ENCODE measurements at regions of chr2 and their contacts with region 1.

Region 1: DNA sequence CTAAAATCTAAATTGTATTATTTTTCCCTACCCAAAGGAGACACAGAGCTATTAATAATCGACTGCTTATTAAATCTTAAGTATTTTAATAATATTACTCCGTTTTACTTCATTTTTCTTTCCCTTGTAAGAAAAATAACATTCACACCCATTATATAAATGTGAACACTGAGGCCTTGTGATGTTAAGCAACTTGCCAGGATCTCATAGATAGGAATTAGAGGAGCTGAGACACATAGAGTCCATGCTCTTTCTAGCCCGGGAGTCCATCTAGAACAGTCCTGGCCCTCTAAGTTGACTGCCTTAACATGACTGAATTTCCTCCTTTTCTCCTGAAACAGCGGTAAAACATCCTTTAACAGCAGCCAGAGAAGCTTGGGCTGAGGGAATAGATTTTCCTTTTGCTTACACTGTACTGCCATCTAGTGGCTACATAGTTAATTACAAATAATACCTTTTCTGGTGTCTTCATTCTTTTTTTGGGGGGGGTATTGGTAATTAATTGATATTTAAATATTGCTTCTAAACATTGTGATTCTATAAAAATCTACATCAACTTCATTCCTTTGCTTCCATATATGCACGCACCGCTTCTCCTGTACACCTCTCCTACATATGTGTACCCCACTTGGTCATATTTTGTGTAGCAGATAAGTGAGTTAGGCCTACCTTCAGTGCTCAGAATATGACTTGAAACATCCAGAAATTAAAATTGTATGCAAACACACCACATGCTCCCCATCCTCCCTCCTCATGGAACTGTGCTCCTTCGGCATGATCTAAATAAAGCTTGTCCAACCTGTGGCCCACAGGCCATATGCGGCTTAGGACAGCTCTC is 125.8 kb upstream of the HNMT start:
- DNase-seq: peak in 1 of 2 experiments; percentile 50
- H3K4me3 ChIP-seq: no peak overlapping the region
- H3K4me3 Mint-ChIP-seq: no peak overlapping the region
- H3K27ac Mint-ChIP-seq: no peak overlapping the region
- H3K4me1 ChIP-seq: no peaks in the 10 kb centered on the region
- H3K4me1 Mint-ChIP-seq: no peaks in the 10 kb centered on the region
- H3K27me3 ChIP-seq: no peaks in the 10 kb centered on the region
- H3K27me3 Mint-ChIP-seq: no peaks in the 10 kb centered on the region
- CTCF ChIP-seq: peak; percentile 40 to 78

Region 2: GRCh38 chr2:136874258-136874657 is 964.2 kb before region 1 on chr2:
- CTCF ChIA-PET with region 1: no interaction called
- POLR2A ChIA-PET with region 1: no interaction called
- intact Hi-C with region 1: loop called (anchors 5 kb)
- DNase-seq: peak in 1 of 2 experiments; percentile 11
- H3K4me3 ChIP-seq: no peak overlapping the region
- H3K4me3 Mint-ChIP-seq: no peak overlapping the region
- H3K27ac Mint-ChIP-seq: no peak overlapping the region
- H3K4me1 ChIP-seq: no peaks in the 10 kb centered on the region
- H3K4me1 Mint-ChIP-seq: no peaks in the 10 kb centered on the region
- H3K27me3 ChIP-seq: no peaks in the 10 kb centered on the region
- H3K27me3 Mint-ChIP-seq: no peaks in the 10 kb centered on the region
- CTCF ChIP-seq: peak in 1 of 2 experiments; percentile 7

Region 3: GRCh38 chr2:137467246-137467862 is 371.1 kb before region 1 on chr2:
- CTCF ChIA-PET with region 1: interaction called, 3 read pairs
- POLR2A ChIA-PET with region 1: no interaction called
- intact Hi-C with region 1: loop called (anchors 1 kb)
- DNase-seq: peak; percentile 57 to 65
- H3K4me3 ChIP-seq: no peak overlapping the region
- H3K4me3 Mint-ChIP-seq: no peak overlapping the region
- H3K27ac Mint-ChIP-seq: no peak overlapping the region
- H3K4me1 ChIP-seq: peaks cover 9% of the 10 kb centered on the region; the same call in 1 of the 2 replicates
- H3K4me1 Mint-ChIP-seq: no peaks in the 10 kb centered on the region
- H3K27me3 ChIP-seq: no peaks in the 10 kb centered on the region
- H3K27me3 Mint-ChIP-seq: no peaks in the 10 kb centered on the region
- CTCF ChIP-seq: peak; percentile 73 to 84

Region 4: DNA sequence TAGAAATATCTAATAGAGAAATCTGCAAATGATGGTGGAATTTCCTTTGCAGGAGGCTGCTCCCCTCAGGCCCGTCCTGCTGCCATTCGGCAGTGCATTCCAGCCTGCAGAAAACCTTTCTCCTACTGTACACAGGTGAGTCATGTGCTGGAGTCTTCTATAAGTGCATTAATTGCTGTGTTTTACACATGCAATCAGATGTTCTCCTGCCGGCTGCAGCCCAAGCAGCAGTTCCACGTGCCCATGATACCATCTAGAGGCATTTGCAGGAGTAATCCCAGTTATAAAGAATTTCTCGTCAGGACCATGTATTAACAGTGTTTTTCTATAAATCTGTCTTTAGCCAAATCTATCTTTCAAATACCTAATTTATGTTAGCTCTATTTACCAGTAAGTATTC is 178.9 kb before region 1 on chr2:
- CTCF ChIA-PET with region 1: no interaction called
- POLR2A ChIA-PET with region 1: no interaction called
- intact Hi-C with region 1: loop called (anchors 5 kb)
- DNase-seq: peak; percentile 17 to 42
- H3K4me3 ChIP-seq: no peak overlapping the region
- H3K4me3 Mint-ChIP-seq: no peak overlapping the region
- H3K27ac Mint-ChIP-seq: no peak overlapping the region
- H3K4me1 ChIP-seq: no peaks in the 10 kb centered on the region
- H3K4me1 Mint-ChIP-seq: no peaks in the 10 kb centered on the region
- H3K27me3 ChIP-seq: no peaks in the 10 kb centered on the region
- H3K27me3 Mint-ChIP-seq: no peaks in the 10 kb centered on the region
- CTCF ChIP-seq: peak in 1 of 2 experiments; percentile 32

Region 5: DNA sequence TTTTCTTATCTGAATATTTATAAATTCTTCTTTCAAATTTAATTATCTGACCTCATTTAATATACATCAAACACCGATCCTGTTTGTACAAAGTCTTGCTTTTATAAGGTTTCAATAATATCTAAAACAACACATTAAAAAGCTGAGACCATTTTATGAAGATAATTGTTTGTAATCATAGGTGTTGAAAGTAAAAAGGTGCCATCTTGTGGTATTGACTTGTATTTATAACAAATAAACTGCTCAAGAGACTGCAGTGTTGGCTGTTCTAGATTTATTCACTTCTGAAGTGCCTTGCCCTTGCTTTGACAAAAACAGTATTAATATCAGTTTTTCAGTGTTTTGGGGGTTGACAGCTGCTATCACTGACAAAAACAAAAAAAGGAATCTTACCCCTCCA is 161.0 kb before region 1 on chr2:
- CTCF ChIA-PET with region 1: no interaction called
- POLR2A ChIA-PET with region 1: no interaction called
- intact Hi-C with region 1: loop called (anchors 2 kb)
- DNase-seq: no peak
- H3K4me3 ChIP-seq: no peak overlapping the region
- H3K4me3 Mint-ChIP-seq: no peak overlapping the region
- H3K27ac Mint-ChIP-seq: no peak overlapping the region
- H3K4me1 ChIP-seq: 0 out of 2 replicates have a peak, but pooled peaks cover 7% of the 10 kb centered on the region
- H3K4me1 Mint-ChIP-seq: peaks cover 13% of the 10 kb centered on the region
- H3K27me3 ChIP-seq: no peaks in the 10 kb centered on the region
- H3K27me3 Mint-ChIP-seq: no peaks in the 10 kb centered on the region
- CTCF ChIP-seq: peak in 1 of 2 experiments; percentile 20

Region 6: GRCh38 chr2:137737559-137737958 is 100.9 kb before region 1 on chr2:
- CTCF ChIA-PET with region 1: no interaction called
- POLR2A ChIA-PET with region 1: no interaction called
- intact Hi-C with region 1: loop called (anchors 10 kb)
- DNase-seq: no peak
- H3K4me3 ChIP-seq: no peak overlapping the region
- H3K4me3 Mint-ChIP-seq: no peak overlapping the region
- H3K27ac Mint-ChIP-seq: no peak overlapping the region
- H3K4me1 ChIP-seq: no peaks in the 10 kb centered on the region
- H3K4me1 Mint-ChIP-seq: no peaks in the 10 kb centered on the region
- H3K27me3 ChIP-seq: no peaks in the 10 kb centered on the region
- H3K27me3 Mint-ChIP-seq: peaks cover 14% of the 10 kb centered on the region
- CTCF ChIP-seq: no peak

Region 7: GRCh38 chr2:137771064-137771463 is 67.4 kb before region 1 on chr2:
- CTCF ChIA-PET with region 1: no interaction called
- POLR2A ChIA-PET with region 1: no interaction called
- intact Hi-C with region 1: loop called (anchors 5 kb)
- DNase-seq: no peak
- H3K4me3 ChIP-seq: no peak overlapping the region
- H3K4me3 Mint-ChIP-seq: no peak overlapping the region
- H3K27ac Mint-ChIP-seq: no peak overlapping the region
- H3K4me1 ChIP-seq: no peaks in the 10 kb centered on the region
- H3K4me1 Mint-ChIP-seq: peaks cover 6% of the 10 kb centered on the region
- H3K27me3 ChIP-seq: no peaks in the 10 kb centered on the region
- H3K27me3 Mint-ChIP-seq: peaks cover 4% of the 10 kb centered on the region
- CTCF ChIP-seq: no peak

Measured in Caco-2 (cell line).